ENCODE measurements at regions of chr10 and their contacts with region 1.

Region 1: DNA sequence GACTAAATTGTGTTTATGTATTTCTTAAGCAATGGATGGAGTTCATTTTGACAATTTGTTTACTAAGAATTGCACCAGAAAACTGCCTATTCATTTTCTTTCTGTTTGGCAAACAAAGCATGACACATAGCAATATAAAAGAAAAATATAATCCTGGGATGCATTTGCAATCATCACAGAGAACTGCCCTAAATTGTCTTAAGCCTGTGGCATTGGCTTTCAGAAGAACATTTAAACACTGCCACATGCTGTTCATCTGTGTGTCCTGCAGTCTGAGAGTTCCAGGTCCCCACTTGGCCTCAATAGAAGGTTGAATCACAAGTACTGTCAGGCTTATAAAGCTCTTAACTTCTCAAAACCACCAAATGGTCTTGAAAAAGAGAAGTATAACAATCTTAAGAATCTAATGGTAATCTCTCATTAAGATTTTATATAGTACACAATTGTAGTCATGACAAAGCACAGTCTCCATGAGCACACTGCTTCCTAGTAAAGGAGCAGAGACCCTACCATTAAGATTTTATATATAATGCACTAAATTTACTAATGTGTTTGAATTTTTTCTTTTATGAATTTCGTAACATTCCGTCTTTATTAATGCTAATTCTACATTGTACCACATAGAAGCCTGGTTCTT is 29.9 kb downstream of the RNLS start:
- DNase-seq: peak; percentile 77
- H3K4me3 ChIP-seq: no peak overlapping the region
- H3K27ac ChIP-seq: no peak overlapping the region
- H3K4me1 ChIP-seq: no peaks in the 10 kb centered on the region
- CTCF ChIP-seq: peak; percentile 97

Region 2: DNA sequence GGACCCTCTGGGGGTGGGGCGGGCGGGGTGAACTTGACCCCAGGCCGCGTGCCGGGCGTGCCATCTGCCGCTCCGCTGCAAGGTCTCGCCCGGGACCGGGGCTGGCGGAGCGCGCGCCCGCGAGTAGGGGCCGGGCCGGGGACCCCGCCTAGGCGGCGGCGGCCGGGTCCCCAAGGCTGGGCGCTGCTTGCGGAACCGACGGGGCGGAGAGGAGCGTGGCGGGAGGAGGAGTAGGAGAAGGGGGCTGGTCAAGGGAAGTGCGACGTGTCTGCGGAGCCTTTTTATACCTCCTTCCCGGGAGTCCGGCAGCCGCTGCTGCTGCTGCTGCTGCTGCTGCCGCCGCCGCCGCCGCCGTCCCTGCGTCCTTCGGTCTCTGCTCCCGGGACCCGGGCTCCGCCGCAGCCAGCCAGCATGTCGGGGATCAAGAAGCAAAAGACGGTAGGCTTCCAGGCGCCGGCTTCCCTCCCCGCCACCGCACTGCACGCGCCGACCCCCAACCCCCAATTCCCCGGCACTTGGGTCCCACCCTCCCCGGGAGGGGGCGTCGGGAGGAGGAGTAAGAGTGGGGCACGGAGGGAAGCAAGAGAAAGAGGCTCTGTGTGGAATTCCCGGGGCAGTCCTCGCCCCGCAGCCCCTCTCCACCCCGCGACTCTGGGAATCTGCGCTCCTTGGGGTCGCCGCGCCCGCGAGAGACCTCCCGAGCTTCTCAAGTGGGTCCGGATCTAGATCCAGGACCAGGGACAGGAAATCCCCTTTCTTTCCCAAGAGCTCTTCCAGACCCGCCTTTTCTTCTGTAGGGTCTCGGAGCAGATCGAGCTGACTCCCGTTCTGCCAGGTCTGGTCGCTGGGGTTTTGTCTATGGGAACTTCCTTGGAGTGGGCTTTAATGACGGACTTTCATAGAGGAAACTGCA is 893.4 kb before region 1 on chr10 and contains the start of gene PAPSS2:
- CTCF ChIA-PET with region 1: no interaction called
- POLR2A ChIA-PET with region 1: no interaction called
- intact Hi-C with region 1: loop called (anchors 5 kb)
- DNase-seq: no peak
- H3K4me3 ChIP-seq: peak within 1 kb of the TSS; percentile 34
- H3K27ac ChIP-seq: no peak within 1 kb of the TSS
- H3K4me1 ChIP-seq: no peaks in the 10 kb centered on the region
- CTCF ChIP-seq: no peak
- total RNA-seq, gene PAPSS2: 0.03 TPM in 1 of 2 replicates, not detected in the other

Region 3: DNA sequence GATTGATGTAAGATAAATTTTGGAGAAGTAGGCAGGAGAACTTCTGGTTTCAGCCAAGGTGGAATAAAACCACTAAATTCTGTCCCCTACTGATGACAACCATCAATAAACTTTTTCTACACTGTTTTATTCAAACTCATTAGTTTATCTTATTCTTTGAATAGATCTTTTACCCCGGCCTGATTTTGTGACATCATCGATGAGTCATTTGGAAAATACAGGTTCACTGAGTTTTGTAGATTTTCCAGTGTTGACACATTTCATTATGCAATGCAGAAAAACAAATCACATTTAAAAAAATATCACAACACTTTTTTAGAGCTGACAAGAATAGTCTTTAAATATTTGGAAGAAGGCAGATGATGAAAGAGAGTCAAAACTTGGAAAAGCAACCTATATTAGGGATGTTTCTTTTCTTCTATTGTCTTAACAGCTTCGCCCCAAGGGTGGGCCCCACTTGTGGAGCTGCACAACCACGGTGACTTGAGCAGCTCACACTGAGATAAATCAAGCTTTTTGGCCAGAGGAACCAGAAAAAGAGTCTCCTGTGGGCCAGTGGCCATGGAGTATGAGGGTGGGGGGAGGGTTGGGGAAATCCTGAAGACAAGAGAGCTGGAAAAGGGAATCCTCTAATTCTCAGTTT is 577.0 kb before region 1 on chr10:
- CTCF ChIA-PET with region 1: no interaction called
- POLR2A ChIA-PET with region 1: no interaction called
- intact Hi-C with region 1: loop called (anchors 5 kb)
- DNase-seq: no peak
- H3K4me3 ChIP-seq: no peak overlapping the region
- H3K27ac ChIP-seq: no peak overlapping the region
- H3K4me1 ChIP-seq: peaks cover 6% of the 10 kb centered on the region
- CTCF ChIP-seq: no peak

Region 4: DNA sequence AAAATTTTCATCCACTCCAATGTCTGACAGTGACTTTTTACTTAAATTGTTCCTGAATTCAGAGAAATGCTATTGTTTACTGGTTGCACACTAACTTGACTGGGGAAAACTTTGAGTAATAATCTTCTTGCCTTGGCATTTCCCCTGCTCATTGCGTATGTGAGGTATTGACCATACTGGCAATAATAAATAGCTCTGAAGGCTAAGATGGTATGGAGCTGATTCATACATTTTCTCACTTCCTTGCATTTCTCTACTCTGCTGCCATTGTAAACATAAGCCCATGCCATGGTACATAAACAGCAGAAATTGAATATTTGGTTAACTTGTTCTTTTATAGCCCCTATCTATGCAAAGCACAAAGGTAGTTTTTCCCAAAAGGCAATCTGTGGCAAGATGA is 260.2 kb before region 1 on chr10:
- CTCF ChIA-PET with region 1: no interaction called
- POLR2A ChIA-PET with region 1: interaction called, 3 read pairs
- intact Hi-C with region 1: loop called (anchors 5 kb)
- DNase-seq: no peak
- H3K4me3 ChIP-seq: no peak overlapping the region
- H3K27ac ChIP-seq: no peak overlapping the region
- H3K4me1 ChIP-seq: peaks cover 49% of the 10 kb centered on the region
- CTCF ChIP-seq: no peak

Region 5: DNA sequence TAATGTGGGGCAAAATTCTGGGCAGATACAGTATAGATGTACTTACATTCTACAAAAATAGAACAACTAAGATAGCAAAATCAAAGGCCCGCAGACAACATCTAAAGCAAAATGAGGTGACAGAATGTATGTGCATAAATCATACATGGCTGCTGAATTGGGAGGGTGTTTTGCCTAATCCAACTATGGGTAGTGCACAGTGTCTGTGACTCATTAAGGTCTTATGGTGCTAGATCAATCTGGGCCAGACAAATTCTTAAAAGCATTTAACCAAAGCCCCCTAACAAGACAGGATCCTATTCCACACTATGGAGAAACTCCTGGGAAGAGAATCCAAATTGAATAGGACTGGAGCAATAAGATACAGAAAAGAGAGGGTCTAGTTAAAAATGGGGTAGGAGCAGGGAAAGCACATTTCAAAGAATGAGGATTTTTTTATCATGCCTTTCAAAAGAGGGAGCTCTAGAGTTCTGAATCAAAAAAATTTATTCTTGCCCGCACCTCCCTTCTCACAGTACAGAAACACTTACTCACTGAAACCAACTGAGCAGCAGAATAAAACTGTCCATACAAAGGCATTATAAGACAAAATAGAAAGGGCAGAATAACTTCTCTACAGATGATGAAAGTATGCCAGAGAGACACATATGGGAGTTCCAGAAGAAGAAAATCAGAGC is 151.4 kb before region 1 on chr10:
- CTCF ChIA-PET with region 1: no interaction called
- POLR2A ChIA-PET with region 1: no interaction called
- intact Hi-C with region 1: loop called (anchors 2 kb)
- DNase-seq: no peak
- H3K4me3 ChIP-seq: no peak overlapping the region
- H3K27ac ChIP-seq: no peak overlapping the region
- H3K4me1 ChIP-seq: no peaks in the 10 kb centered on the region
- CTCF ChIP-seq: peak; percentile 73

Measured in OCI-LY7 (cell line).